Activated T-helper 2 cell treated with anti-CD3 and anti-CD28 coated beads, Interferon-gamma antibody, Interleukin-2, Interleukin-4, amounts not matched to agents 10 μg/mL and 5 μg/mL and 100 μg/mL, durations not matched to agents 14 hours and 24 hours and 36 hours (primary cell): ENCODE measurements at regions of chr3 and their contacts with region 1.

Region 1: GRCh38 chr3:160027541-160028195 is 39.0 kb downstream of the IL12A start:
- DNase-seq: peak; percentile 41
- H3K4me3 Mint-ChIP-seq: peak overlapping the region; percentile 20
- H3K27ac Mint-ChIP-seq: peak overlapping the region; percentile 92
- H3K4me1 Mint-ChIP-seq: peaks cover 42% of the 10 kb centered on the region
- H3K27me3 Mint-ChIP-seq: no peaks in the 10 kb centered on the region

Region 2: DNA sequence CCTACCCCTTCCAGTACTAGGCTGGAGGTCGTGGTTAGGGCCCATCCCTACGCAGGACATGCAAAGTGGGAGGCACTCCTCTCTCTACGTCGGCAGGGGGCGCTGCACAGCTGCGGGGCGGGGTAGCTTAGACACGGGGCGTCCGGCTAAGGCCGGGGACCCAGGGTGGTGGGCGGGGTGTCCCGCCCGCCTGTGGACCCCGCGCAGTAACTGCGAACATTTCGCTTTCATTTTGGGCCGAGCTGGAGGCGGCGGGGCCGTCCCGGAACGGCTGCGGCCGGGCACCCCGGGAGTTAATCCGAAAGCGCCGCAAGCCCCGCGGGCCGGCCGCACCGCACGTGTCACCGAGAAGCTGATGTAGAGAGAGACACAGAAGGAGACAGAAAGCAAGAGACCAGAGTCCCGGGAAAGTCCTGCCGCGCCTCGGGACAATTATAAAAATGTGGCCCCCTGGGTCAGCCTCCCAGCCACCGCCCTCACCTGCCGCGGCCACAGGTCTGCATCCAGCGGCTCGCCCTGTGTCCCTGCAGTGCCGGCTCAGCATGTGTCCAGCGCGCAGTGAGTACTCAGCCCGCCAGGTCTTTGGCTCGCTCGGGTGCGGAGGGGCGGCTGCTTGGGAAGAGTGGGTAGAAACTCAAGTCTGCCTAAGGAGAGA is 38.9 kb before region 1 on chr3 and contains the start of gene IL12A:
- intact Hi-C with region 1: loop called (anchors 1 kb)
- DNase-seq: peak; percentile 79
- H3K4me3 Mint-ChIP-seq: peak within 1 kb of the TSS; percentile 75
- H3K27ac Mint-ChIP-seq: peak within 1 kb of the TSS; percentile 42
- H3K4me1 Mint-ChIP-seq: peaks cover 34% of the 10 kb centered on the region
- H3K27me3 Mint-ChIP-seq: peaks cover 15% of the 10 kb centered on the region
- total RNA-seq, gene IL12A: 0.53 and 0.87 TPM in 2 replicates

Region 3: GRCh38 chr3:160127308-160127707 is 99.6 kb after region 1 on chr3:
- intact Hi-C with region 1: loop called (anchors 2 kb)
- DNase-seq: no peak
- H3K4me3 Mint-ChIP-seq: no peak overlapping the region
- H3K27ac Mint-ChIP-seq: no peak overlapping the region
- H3K4me1 Mint-ChIP-seq: peaks cover 50% of the 10 kb centered on the region
- H3K27me3 Mint-ChIP-seq: no peaks in the 10 kb centered on the region

Region 4: GRCh38 chr3:160225176-160226025 is 197.7 kb after region 1 on chr3 and contains the start of gene C3orf80:
- intact Hi-C with region 1: loop called (anchors 5 kb)
- DNase-seq: peak; percentile 38
- H3K4me3 Mint-ChIP-seq: peak within 1 kb of the TSS; percentile 81
- H3K27ac Mint-ChIP-seq: no peak within 1 kb of the TSS
- H3K4me1 Mint-ChIP-seq: peaks cover 15% of the 10 kb centered on the region
- H3K27me3 Mint-ChIP-seq: peaks cover 67% of the 10 kb centered on the region
- total RNA-seq, gene C3orf80: 0.25 and 0.30 TPM in 2 replicates

Region 5: GRCh38 chr3:160399125-160400029 is 371.7 kb after region 1 on chr3 and contains the starts of genes IFT80 and SMC4:
- intact Hi-C with region 1: loop called (anchors 5 kb)
- DNase-seq: peak; percentile 92
- H3K4me3 Mint-ChIP-seq: peak within 1 kb of the TSS; percentile 92
- H3K27ac Mint-ChIP-seq: peak within 1 kb of the TSS; percentile 99
- H3K4me1 Mint-ChIP-seq: peaks cover 44% of the 10 kb centered on the region
- H3K27me3 Mint-ChIP-seq: no peaks in the 10 kb centered on the region
- total RNA-seq, gene IFT80: 16.6 and 19.2 TPM in 2 replicates
- total RNA-seq, gene SMC4: 180 and 194 TPM in 2 replicates

Region 6: DNA sequence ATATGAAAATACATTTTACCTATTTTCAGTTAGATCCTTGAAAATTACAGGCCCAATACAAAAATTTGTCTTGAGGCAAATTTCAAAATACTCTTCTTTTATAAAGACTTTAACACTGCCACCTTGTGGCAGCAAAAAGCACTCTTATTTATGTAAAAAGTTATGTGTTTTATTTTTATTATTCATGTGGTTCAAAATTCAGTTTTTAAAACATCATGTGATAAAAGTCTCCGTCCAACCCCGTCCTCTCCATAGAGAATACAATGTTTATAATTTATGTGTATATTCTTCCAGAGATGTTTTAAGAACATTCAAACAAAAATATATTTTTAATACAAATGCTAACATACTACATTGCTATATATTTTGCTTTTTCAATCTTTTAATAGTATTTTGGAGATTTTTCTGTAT is 458.8 kb after region 1 on chr3:
- intact Hi-C with region 1: loop called (anchors 5 kb)
- DNase-seq: no peak
- H3K4me3 Mint-ChIP-seq: no peak overlapping the region
- H3K27ac Mint-ChIP-seq: no peak overlapping the region
- H3K4me1 Mint-ChIP-seq: peaks cover 7% of the 10 kb centered on the region
- H3K27me3 Mint-ChIP-seq: peaks cover 2% of the 10 kb centered on the region